ENCODE measurements at regions of chr10 and their contacts with region 1.

Region 1: GRCh38 chr10:77531441-77532001 is 106.1 kb downstream of the KCNMA1 start:
- DNase-seq: peak; percentile 92
- ATAC-seq: peak; percentile 80
- H3K4me3 ChIP-seq: no peak overlapping the region
- H3K27ac ChIP-seq: peak overlapping the region; percentile 65
- H3K4me1 ChIP-seq: peaks cover 35% of the 10 kb centered on the region
- H3K27me3 ChIP-seq: no peaks in the 10 kb centered on the region
- CTCF ChIP-seq: no peak
- POLR2A ChIP-seq: 0 out of 2 replicates have a peak, but pooled peaks have one; percentile 33
- RAD21 ChIP-seq: peak; percentile 29

Region 2: DNA sequence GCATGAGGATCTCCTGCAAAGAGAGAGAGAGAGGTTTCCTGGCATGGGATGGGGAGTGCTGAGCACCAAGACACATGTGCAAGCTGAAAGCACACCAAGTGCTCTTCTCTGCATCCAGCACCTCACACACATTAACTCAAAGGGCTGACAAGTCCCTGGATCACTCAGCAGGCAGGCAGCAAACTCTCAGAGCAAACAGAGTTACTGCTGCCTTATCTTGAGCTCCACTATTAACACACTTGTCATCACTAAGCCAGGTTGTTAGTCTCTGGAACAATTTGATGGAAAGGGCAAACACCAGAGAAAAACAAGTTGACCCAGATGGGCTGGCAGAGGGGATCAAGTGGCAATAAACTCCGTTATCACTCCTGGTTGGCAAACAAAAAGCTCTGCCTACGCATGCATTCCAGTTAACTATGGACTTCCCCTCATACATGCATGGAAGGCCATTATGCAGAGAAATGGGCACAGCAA is 243.8 kb before region 1 on chr10:
- CTCF ChIA-PET with region 1: no interaction called
- POLR2A ChIA-PET with region 1: no interaction called
- dilution Hi-C with region 1: no loop called
- in situ Hi-C with region 1: no loop called
- intact Hi-C with region 1: no loop called
- DNase-seq: no peak
- ATAC-seq: no peak
- H3K4me3 ChIP-seq: no peak overlapping the region
- H3K27ac ChIP-seq: no peak overlapping the region
- H3K4me1 ChIP-seq: peaks cover 9% of the 10 kb centered on the region
- H3K27me3 ChIP-seq: no peaks in the 10 kb centered on the region
- CTCF ChIP-seq: no peak
- POLR2A ChIP-seq: no peak
- RAD21 ChIP-seq: no peak

Region 3: GRCh38 chr10:77448226-77448625 is 83.3 kb before region 1 on chr10:
- CTCF ChIA-PET with region 1: no interaction called
- POLR2A ChIA-PET with region 1: no interaction called
- dilution Hi-C with region 1: no loop called
- in situ Hi-C with region 1: no loop called
- intact Hi-C with region 1: no loop called
- DNase-seq: no peak
- ATAC-seq: no peak
- H3K4me3 ChIP-seq: no peak overlapping the region
- H3K27ac ChIP-seq: no peak overlapping the region
- H3K4me1 ChIP-seq: no peaks in the 10 kb centered on the region
- H3K27me3 ChIP-seq: no peaks in the 10 kb centered on the region
- CTCF ChIP-seq: no peak
- POLR2A ChIP-seq: no peak
- RAD21 ChIP-seq: no peak

Region 4: DNA sequence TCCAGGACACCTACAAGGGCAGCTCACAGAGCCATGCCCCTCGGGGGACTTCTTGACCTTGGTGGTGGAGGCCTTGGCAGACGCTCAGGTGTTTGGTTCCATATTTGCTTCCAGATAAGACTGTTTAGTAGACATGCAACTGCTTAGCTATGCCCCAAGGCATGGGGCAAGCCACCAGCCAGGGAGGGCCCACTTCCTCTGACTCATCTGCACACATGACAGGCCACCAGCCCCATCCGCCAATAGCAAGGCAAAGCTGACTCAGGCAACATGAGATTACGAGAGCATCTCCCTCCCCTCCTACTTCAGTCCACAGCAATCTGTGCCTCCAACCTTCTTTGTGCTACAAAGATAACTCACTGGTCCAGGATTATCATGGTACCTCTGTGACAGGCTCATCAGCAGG is 51.2 kb after region 1 on chr10:
- CTCF ChIA-PET with region 1: no interaction called
- POLR2A ChIA-PET with region 1: no interaction called
- dilution Hi-C with region 1: no loop called
- in situ Hi-C with region 1: no loop called
- intact Hi-C with region 1: loop called (anchors 10 kb)
- DNase-seq: peak; percentile 79
- ATAC-seq: peak; percentile 42
- H3K4me3 ChIP-seq: no peak overlapping the region
- H3K27ac ChIP-seq: no peak overlapping the region
- H3K4me1 ChIP-seq: peaks cover 17% of the 10 kb centered on the region
- H3K27me3 ChIP-seq: no peaks in the 10 kb centered on the region
- CTCF ChIP-seq: no peak
- POLR2A ChIP-seq: no peak
- RAD21 ChIP-seq: no peak

Measured in IMR-90 (cell line).